GM10248 (cell line): ENCODE measurements at regions of chr2 and their contacts with region 1.

Region 1: GRCh38 chr2:46461011-46461674 is 18.2 kb upstream of the TMEM247 start:
- DNase-seq: peak; percentile 71
- CTCF ChIP-seq: peak; percentile 97

Region 2: DNA sequence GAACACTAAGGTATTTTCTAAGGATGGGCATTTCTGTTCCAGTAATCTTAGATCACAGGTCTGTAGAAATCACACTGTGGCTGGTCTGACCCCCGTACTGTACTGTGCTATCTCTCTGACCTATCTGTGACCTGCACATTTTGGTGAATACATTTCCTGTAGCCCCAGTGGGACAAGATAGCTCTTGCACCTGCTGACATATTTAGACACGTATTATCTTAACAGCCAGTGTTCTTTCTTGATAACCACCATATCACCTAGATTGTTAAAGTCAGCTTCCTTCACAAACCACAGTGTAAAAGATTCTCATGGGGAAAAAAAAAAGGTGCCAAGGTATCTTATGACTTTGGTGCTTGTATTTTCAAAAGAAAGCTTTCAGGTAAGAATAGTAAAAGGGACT is 21.6 kb before region 1 on chr2:
- CTCF ChIA-PET with region 1: interaction called, 29 read pairs
- POLR2A ChIA-PET with region 1: no interaction called
- DNase-seq: no peak
- CTCF ChIP-seq: no peak

Region 3: GRCh38 chr2:46580416-46580815 is 119.3 kb after region 1 on chr2:
- CTCF ChIA-PET with region 1: no interaction called
- POLR2A ChIA-PET with region 1: no interaction called
- DNase-seq: no peak
- CTCF ChIP-seq: no peak